ENCODE measurements at regions of chr9 and their contacts with region 1.

Region 1: GRCh38 chr9:116149844-116150243 is 3.7 kb upstream of the PAPPA start:
- DNase-seq: peak; percentile 63
- ATAC-seq: peak; percentile 49
- H3K4me3 Mint-ChIP-seq: no peak overlapping the region
- H3K27ac Mint-ChIP-seq: no peak overlapping the region
- H3K4me1 Mint-ChIP-seq: peaks cover 12% of the 10 kb centered on the region
- H3K27me3 Mint-ChIP-seq: peaks cover 35% of the 10 kb centered on the region
- CTCF ChIP-seq: peak; percentile 83

Region 2: DNA sequence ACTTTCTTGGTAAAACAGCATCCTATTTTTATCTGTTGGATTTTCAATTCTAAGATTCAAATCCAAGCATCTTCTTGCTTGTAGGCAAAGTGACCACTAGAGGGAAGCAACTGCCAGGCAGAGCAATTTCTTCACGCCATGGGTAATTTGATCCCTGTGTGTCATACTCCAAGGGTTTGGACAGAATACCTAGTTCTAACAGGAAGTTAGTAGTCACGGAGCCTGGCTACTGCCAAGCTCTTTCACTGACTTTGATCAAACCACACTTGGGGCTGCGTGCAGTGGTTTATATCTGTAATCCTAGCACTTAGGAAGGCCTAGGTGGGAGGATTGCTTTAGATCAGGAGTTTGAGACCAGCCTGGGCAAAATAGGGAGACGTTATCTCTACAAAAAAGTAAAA is 558.3 kb before region 1 on chr9:
- CTCF ChIA-PET with region 1: interaction called, 24 read pairs
- POLR2A ChIA-PET with region 1: no interaction called
- DNase-seq: peak; percentile 47
- ATAC-seq: peak; percentile 88
- H3K4me3 Mint-ChIP-seq: peak overlapping the region; percentile 54
- H3K27ac Mint-ChIP-seq: peak overlapping the region; percentile 94; the same call in 1 of the 2 replicates
- H3K4me1 Mint-ChIP-seq: peaks cover 25% of the 10 kb centered on the region
- H3K27me3 Mint-ChIP-seq: peaks cover 8% of the 10 kb centered on the region
- CTCF ChIP-seq: peak; percentile 72

Region 3: GRCh38 chr9:116042321-116042720 is 107.5 kb before region 1 on chr9:
- CTCF ChIA-PET with region 1: no interaction called
- POLR2A ChIA-PET with region 1: no interaction called
- DNase-seq: no peak
- ATAC-seq: no peak
- H3K4me3 Mint-ChIP-seq: no peak overlapping the region
- H3K27ac Mint-ChIP-seq: no peak overlapping the region
- H3K4me1 Mint-ChIP-seq: no peaks in the 10 kb centered on the region
- H3K27me3 Mint-ChIP-seq: no peaks in the 10 kb centered on the region
- CTCF ChIP-seq: no peak

Region 4: GRCh38 chr9:116572095-116572748 is 422.4 kb after region 1 on chr9:
- CTCF ChIA-PET with region 1: interaction called, 22 read pairs
- POLR2A ChIA-PET with region 1: no interaction called
- DNase-seq: peak; percentile 86
- ATAC-seq: peak; percentile 97
- H3K4me3 Mint-ChIP-seq: no peak overlapping the region
- H3K27ac Mint-ChIP-seq: no peak overlapping the region
- H3K4me1 Mint-ChIP-seq: peaks cover 13% of the 10 kb centered on the region; the same call in 1 of the 2 replicates
- H3K27me3 Mint-ChIP-seq: no peaks in the 10 kb centered on the region
- CTCF ChIP-seq: peak; percentile 88